A673 (cell line): ENCODE measurements at regions of chr20 and their contacts with region 1.

Region 1: DNA sequence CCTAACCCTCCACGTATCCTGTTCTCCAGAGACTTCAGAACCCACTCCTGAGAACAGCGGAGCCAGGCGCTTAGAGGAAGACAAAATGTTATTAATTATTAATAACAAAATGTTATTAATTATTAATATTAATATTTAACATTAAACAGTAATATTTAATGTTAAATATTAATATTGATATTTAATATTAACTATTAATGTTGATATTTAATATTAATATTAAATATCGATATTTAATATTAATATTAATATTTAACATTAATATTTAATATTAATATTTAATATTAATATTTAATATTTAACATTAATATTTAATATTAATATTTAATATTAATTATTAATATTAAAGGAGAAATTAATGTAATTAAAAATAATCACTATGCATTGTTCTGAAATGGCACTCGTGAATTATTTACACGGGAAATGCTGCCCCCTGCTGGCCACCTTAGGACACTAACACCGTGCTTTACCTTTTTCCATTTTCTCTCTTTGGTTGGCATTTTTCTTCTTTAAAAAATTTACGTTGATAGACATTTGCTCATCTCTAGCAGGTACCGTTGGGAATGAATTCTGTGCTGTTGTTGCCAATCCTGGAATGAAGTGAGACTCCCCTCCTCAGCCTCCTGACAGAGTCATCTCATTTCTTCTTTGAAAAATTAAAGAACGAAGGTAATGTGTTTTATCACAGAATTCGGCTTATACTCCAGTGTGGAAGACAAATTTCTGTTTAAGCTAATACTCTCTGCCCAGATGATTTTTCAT is 7.5 kb upstream of the GGTLC1 start:
- DNase-seq: peak; percentile 56
- H3K4me3 ChIP-seq: no peak overlapping the region
- H3K27ac ChIP-seq: no peak overlapping the region
- H3K4me1 ChIP-seq: no peaks in the 10 kb centered on the region
- H3K27me3 ChIP-seq: peaks cover 25% of the 10 kb centered on the region
- CTCF ChIP-seq: peak; percentile 81

Region 2: GRCh38 chr20:23245553-23246181 is 750.4 kb before region 1 on chr20:
- CTCF ChIA-PET with region 1: no interaction called
- POLR2A ChIA-PET with region 1: no interaction called
- intact Hi-C with region 1: no loop called
- DNase-seq: no peak
- H3K4me3 ChIP-seq: no peak overlapping the region
- H3K27ac ChIP-seq: no peak overlapping the region
- H3K4me1 ChIP-seq: no peaks in the 10 kb centered on the region
- H3K27me3 ChIP-seq: peaks cover 3% of the 10 kb centered on the region
- CTCF ChIP-seq: peak; percentile 35

Region 3: DNA sequence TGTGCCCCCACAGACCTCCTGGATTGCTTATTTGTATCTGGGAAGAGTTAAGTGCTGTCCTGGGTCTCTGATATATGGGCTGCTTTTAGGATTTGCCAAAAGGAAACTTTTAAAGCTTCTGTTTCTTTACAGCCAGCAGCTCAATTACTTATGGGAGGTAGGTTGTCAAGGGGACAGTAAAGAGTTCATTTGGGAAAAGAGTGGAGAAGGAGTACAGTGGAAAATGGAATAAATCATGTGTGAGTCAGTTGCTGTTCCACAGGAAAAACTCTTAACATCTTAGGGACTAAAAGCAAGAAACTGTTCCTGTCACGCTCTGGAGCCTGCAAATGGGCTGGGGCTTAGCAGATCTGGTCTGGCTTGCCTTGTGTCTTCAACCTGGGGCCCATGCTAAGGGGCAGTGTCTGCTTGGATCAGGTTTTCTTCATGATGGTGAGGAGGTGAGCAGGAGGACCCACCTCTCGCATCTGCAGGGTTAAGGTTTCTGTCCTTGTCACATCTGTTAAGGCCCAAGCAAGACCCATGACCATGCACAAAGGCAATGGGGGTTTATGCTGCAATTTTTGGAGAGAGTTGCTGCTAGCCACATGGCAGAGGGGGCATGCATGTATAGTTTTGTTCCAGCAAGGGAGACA is 236.7 kb before region 1 on chr20:
- CTCF ChIA-PET with region 1: no interaction called
- POLR2A ChIA-PET with region 1: no interaction called
- intact Hi-C with region 1: no loop called
- DNase-seq: no peak
- H3K4me3 ChIP-seq: no peak overlapping the region
- H3K27ac ChIP-seq: no peak overlapping the region
- H3K4me1 ChIP-seq: no peaks in the 10 kb centered on the region
- H3K27me3 ChIP-seq: peaks cover 10% of the 10 kb centered on the region
- CTCF ChIP-seq: no peak

Region 4: DNA sequence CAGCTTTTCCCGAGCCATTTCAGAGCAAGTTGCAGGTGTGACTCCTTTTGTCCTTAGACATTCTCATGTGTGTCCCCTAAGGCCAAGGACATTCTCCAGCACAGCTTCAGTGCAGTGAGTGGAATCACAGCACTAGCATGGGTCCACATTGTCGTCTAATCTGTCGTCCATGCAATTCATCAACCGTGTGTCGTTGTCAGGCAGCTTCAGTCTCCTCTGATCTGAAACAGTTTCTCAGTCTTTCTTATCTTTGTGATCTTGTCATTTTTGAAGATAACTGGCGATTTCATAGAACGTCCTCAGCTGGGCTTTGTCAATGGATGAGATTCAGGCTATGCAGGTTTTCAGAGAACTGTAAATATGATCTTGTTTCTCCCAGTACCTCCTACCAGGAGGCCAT is 201.2 kb before region 1 on chr20:
- CTCF ChIA-PET with region 1: no interaction called
- POLR2A ChIA-PET with region 1: no interaction called
- intact Hi-C with region 1: loop called (anchors 10 kb)
- DNase-seq: no peak
- H3K4me3 ChIP-seq: no peak overlapping the region
- H3K27ac ChIP-seq: no peak overlapping the region
- H3K4me1 ChIP-seq: no peaks in the 10 kb centered on the region
- H3K27me3 ChIP-seq: peaks cover 3% of the 10 kb centered on the region
- CTCF ChIP-seq: no peak

Region 5: GRCh38 chr20:24066076-24066700 is 70.1 kb after region 1 on chr20:
- CTCF ChIA-PET with region 1: no interaction called
- POLR2A ChIA-PET with region 1: no interaction called
- intact Hi-C with region 1: no loop called
- DNase-seq: no peak
- H3K4me3 ChIP-seq: no peak overlapping the region
- H3K27ac ChIP-seq: no peak overlapping the region
- H3K4me1 ChIP-seq: no peaks in the 10 kb centered on the region
- H3K27me3 ChIP-seq: peaks cover 7% of the 10 kb centered on the region
- CTCF ChIP-seq: no peak